H1 (cell line): ENCODE measurements at regions of chr4 and their contacts with region 1.

Region 1: DNA sequence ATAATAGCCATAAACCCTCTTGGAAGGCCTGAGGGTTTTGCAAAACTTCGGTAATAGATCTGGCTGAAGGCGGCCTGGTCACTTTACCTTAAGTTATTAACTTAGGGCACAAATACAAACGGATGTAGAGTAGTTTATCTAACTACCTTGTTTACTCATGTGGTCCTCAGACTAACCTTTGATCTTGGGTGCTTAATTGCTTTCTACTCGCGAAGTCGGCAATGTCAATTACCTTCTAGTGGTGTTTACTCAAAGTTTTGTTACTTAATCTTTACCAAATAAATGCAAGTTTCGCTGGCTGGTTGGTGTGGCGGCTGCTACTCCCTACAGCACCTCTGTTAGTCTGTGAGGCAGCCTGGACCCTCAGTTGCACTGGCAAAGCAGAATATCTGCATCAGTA is 8.9 kb upstream of the ZNF141 start:
- DNase-seq: no peak
- H3K4me3 ChIP-seq: no peak overlapping the region
- H3K27ac ChIP-seq: no peak overlapping the region
- H3K4me1 ChIP-seq: no peaks in the 10 kb centered on the region
- H3K27me3 ChIP-seq: no peaks in the 10 kb centered on the region
- CTCF ChIP-seq: no peak
- EP300 ChIP-seq: no peak
- POLR2A ChIP-seq: no peak
- RAD21 ChIP-seq: no peak

Region 2: DNA sequence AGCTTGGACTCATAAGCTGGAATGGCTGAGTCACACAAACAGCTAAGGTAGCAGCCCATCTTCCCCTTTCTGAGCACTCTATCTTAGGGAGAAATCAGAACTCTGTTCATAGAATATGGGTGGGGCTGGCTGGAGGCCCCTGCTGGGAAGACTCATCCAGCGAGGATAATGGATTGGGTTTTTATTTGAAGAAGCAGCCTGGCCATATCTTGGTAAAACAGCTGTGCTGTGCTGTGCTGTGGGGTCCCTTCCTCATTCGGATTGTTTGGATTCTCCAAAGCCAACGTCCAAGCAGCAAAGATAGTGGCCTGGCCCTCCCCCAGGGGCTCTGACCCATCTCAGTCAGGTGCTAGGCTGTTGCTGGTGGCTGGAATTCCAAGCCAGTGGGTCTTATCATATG is 140.7 kb before region 1 on chr4:
- CTCF ChIA-PET with region 1: no interaction called
- POLR2A ChIA-PET with region 1: no interaction called
- DNase-seq: no peak
- H3K4me3 ChIP-seq: no peak overlapping the region
- H3K27ac ChIP-seq: no peak overlapping the region
- H3K4me1 ChIP-seq: no peaks in the 10 kb centered on the region
- H3K27me3 ChIP-seq: no peaks in the 10 kb centered on the region
- CTCF ChIP-seq: no peak
- EP300 ChIP-seq: no peak
- POLR2A ChIP-seq: no peak
- RAD21 ChIP-seq: no peak

Region 3: GRCh38 chr4:256492-256891 is 72.2 kb before region 1 on chr4:
- CTCF ChIA-PET with region 1: interaction called, 14 read pairs
- POLR2A ChIA-PET with region 1: no interaction called
- DNase-seq: no peak
- H3K4me3 ChIP-seq: no peak overlapping the region
- H3K27ac ChIP-seq: no peak overlapping the region
- H3K4me1 ChIP-seq: no peaks in the 10 kb centered on the region
- H3K27me3 ChIP-seq: no peaks in the 10 kb centered on the region
- CTCF ChIP-seq: no peak
- EP300 ChIP-seq: no peak
- POLR2A ChIP-seq: no peak
- RAD21 ChIP-seq: no peak

Region 4: DNA sequence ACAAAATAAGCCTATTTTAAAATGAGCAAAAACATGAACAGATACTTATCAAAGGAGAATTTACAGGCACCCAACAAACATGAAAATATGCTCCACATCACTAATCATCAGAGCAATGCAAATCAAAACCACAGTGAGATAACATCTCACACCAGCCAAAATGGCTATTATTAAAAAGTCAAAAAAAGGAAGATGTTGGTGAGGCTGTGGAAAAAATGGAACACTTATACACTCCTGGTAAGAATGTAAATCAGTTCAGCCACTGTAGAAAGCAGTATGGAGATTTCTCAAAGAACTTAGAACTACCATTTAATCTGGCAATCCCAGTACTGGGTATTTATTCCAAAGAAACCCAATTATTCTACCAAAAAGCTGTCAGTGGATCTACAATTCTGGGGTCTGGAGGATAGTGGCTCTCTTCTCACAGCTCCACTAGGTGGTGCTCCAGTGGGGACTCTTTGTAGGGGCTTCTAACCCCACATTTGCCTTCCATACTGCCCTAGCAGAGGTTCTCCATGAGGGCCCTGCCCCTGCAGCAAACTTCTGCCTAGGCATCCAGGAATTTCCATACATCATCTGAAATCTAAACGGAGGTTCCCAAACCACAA is 14.3 kb before region 1 on chr4:
- CTCF ChIA-PET with region 1: interaction called, 17 read pairs
- POLR2A ChIA-PET with region 1: interaction called, 6 read pairs
- DNase-seq: no peak
- H3K4me3 ChIP-seq: no peak overlapping the region
- H3K27ac ChIP-seq: no peak overlapping the region
- H3K4me1 ChIP-seq: no peaks in the 10 kb centered on the region
- H3K27me3 ChIP-seq: peaks cover 0 to 2% (median 0%) of the 10 kb centered on the region in 4 experiments; a peak in 1 of 7 replicates
- CTCF ChIP-seq: peak; percentile 2 to 29 (median 17); a peak in 3 of 4 replicates
- EP300 ChIP-seq: no peak
- POLR2A ChIP-seq: no peak
- RAD21 ChIP-seq: 0 out of 4 replicates have a peak, but pooled peaks of 1 of the 2 experiments have one; percentile 19